CD4-positive, alpha-beta T cell (primary cell): ENCODE measurements at regions of chr4 and their contacts with region 1.

Region 1: GRCh38 chr4:139295206-139295941 is 5.9 kb upstream of the NAA15 start:
- DNase-seq: peak; percentile 95 to 100 (median 98)
- ATAC-seq: peak; percentile 92
- H3K4me3 ChIP-seq: peak overlapping the region; percentile 94
- H3K4me3 Mint-ChIP-seq: peak overlapping the region; percentile 96
- H3K27ac ChIP-seq: peak overlapping the region; percentile 77 to 84
- H3K27ac Mint-ChIP-seq: peak overlapping the region; percentile 92
- H3K4me1 ChIP-seq: peaks cover 15% of the 10 kb centered on the region
- H3K4me1 Mint-ChIP-seq: peaks cover 33% of the 10 kb centered on the region
- H3K27me3 ChIP-seq: no peaks in the 10 kb centered on the region
- H3K27me3 Mint-ChIP-seq: no peaks in the 10 kb centered on the region
- CTCF ChIP-seq: peak; percentile 87

Region 2: DNA sequence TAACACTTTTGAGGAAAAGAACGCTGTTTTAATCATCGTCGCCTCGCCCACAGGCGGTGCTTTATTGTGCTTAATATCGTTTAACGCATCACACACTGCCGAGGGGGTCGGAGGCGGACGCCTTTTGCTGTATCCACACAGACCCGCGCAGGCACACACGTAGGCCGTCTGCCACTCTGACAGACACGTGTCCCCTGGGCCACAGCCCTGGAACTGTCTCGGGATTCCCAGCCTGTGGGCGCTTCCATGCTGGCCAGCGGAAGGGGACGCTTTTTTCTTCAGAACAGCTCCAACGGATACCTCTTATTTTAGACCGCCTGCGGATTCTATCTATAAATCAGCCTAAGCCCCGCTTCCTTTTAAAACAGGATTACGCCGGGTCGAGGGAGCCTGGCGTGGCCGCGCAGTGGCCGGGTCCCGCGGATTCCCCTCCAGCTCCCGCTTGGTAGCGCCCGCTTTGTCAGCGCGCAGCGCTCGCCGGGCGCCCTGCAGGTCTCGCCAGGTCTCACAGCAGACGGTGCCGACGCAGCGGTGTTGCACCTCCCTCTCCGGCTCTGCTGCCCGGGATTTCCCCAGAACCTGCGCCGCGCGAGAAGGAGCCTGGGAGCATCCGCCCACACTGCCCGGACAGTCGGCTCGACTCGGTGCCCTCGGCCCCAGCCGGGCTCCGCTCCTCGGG is 280.0 kb before region 1 on chr4 and contains the start of gene NOCT:
- CTCF ChIA-PET with region 1: interaction called, 6 read pairs
- POLR2A ChIA-PET with region 1: interaction called, 8 read pairs
- intact Hi-C with region 1: loop called (anchors 5 kb)
- DNase-seq: peak; percentile 75 to 98 (median 86)
- ATAC-seq: peak; percentile 90
- H3K4me3 ChIP-seq: peak within 1 kb of the TSS; percentile 74
- H3K4me3 Mint-ChIP-seq: peak within 1 kb of the TSS; percentile 93
- H3K27ac ChIP-seq: peak within 1 kb of the TSS; percentile 78 to 87
- H3K27ac Mint-ChIP-seq: peak within 1 kb of the TSS; percentile 95
- H3K4me1 ChIP-seq: peaks cover 20% of the 10 kb centered on the region
- H3K4me1 Mint-ChIP-seq: peaks cover 26% of the 10 kb centered on the region
- H3K27me3 ChIP-seq: no peaks in the 10 kb centered on the region
- H3K27me3 Mint-ChIP-seq: no peaks in the 10 kb centered on the region
- CTCF ChIP-seq: no peak
- total RNA-seq, gene NOCT: 13.7 to 15.8 TPM

Region 3: GRCh38 chr4:139099366-139099982 is 195.9 kb before region 1 on chr4:
- CTCF ChIA-PET with region 1: interaction called, 17 read pairs
- POLR2A ChIA-PET with region 1: interaction called, 3 read pairs
- intact Hi-C with region 1: loop called (anchors 1 kb)
- DNase-seq: peak; percentile 50 to 90 (median 66)
- ATAC-seq: peak; percentile 88
- H3K4me3 ChIP-seq: no peak overlapping the region
- H3K4me3 Mint-ChIP-seq: no peak overlapping the region
- H3K27ac ChIP-seq: no peak overlapping the region
- H3K27ac Mint-ChIP-seq: no peak overlapping the region
- H3K4me1 ChIP-seq: no peaks in the 10 kb centered on the region
- H3K4me1 Mint-ChIP-seq: peaks cover 5% of the 10 kb centered on the region
- H3K27me3 ChIP-seq: no peaks in the 10 kb centered on the region
- H3K27me3 Mint-ChIP-seq: no peaks in the 10 kb centered on the region
- CTCF ChIP-seq: peak; percentile 89

Region 4: DNA sequence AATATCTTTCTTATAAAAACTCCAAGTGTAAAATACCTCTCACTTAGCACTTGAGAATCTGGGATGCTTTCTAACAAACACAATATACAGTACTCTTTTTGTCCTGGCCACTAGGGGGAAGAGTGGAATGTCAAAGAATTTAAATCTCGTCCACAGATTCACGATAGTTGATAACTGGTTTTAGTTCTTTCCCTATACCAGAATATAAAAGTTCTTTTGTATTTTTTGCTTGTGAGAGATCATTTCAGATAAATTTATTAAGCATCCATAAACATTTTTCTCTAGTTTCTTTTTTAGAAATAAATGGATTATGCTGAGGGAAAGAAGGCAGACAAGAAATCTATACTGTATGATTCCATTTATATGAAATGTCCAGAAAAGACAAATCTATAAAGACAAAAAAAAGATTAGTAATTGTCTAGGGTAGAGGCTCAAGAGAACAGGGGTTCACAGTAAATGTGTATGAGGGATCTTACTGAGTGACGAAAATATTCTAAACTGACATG is 65.8 kb before region 1 on chr4:
- CTCF ChIA-PET with region 1: interaction called, 10 read pairs
- POLR2A ChIA-PET with region 1: interaction called, 5 read pairs
- intact Hi-C with region 1: loop called (anchors 2 kb)
- DNase-seq: peak in 4 of 14 experiments; percentile 17 to 71 (median 67)
- ATAC-seq: peak; percentile 71
- H3K4me3 ChIP-seq: no peak overlapping the region
- H3K4me3 Mint-ChIP-seq: no peak overlapping the region
- H3K27ac ChIP-seq: no peak overlapping the region
- H3K27ac Mint-ChIP-seq: no peak overlapping the region
- H3K4me1 ChIP-seq: no peaks in the 10 kb centered on the region
- H3K4me1 Mint-ChIP-seq: no peaks in the 10 kb centered on the region
- H3K27me3 ChIP-seq: no peaks in the 10 kb centered on the region
- H3K27me3 Mint-ChIP-seq: no peaks in the 10 kb centered on the region
- CTCF ChIP-seq: peak; percentile 82

Region 5: DNA sequence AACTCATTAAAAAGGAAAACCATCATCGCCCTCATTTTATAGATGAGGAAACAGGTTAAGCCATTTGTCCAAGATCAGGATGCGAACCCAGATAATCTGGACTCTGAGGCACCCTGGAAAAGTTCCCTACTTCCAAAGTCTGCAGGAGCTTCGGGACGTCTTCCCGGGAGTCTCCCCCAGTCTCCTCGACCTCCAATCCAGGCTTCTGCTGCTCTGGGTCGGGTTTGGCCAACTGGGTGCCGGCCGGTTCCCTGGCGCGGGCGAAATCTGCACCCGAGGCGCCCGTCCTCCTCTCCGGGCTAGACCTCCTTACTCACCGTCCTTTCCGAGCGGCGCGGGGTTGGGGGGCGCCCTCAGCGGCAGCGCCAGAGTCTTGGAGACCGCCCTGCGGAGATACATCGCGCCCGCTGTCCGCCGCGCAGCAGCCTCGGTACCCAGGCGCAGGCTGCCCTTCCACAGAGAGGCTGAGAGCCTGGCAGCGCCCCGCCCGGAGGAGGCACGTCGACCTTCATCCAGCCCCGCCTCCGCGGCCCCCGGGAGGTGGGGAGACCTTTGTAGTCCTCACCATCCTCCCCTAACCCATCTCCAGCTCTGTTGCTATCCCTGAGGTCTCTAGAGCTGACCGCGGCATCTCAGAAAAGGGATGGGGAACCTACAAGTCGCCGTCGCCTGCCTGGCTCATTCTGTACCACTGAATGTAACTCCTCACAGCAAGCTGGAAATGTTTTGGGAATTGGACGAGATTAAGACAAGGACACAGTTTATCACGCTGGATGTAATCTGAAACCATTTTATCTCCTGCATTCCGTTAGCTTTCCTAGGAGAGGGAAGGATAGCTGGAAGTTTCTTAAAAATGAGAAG is 15.4 kb before region 1 on chr4 and contains the start of gene MGARP:
- CTCF ChIA-PET with region 1: interaction called, 5 read pairs
- POLR2A ChIA-PET with region 1: interaction called, 3 read pairs
- intact Hi-C with region 1: loop called in 1 of 2 experiments (anchors 2 kb)
- DNase-seq: peak in 5 of 14 experiments; percentile 20 to 42 (median 36)
- ATAC-seq: peak; percentile 59
- H3K4me3 ChIP-seq: peak within 1 kb of the TSS; percentile 48
- H3K4me3 Mint-ChIP-seq: peak within 1 kb of the TSS; percentile 77
- H3K27ac ChIP-seq: no peak within 1 kb of the TSS
- H3K27ac Mint-ChIP-seq: no peak within 1 kb of the TSS
- H3K4me1 ChIP-seq: peaks cover 21% of the 10 kb centered on the region
- H3K4me1 Mint-ChIP-seq: peaks cover 18% of the 10 kb centered on the region
- H3K27me3 ChIP-seq: peaks cover 22 to 48% of the 10 kb centered on the region in 2 experiments
- H3K27me3 Mint-ChIP-seq: peaks cover 56% of the 10 kb centered on the region
- CTCF ChIP-seq: no peak
- total RNA-seq, gene MGARP: not detected

Region 6: GRCh38 chr4:139403462-139403861 is 108.1 kb after region 1 on chr4:
- CTCF ChIA-PET with region 1: no interaction called
- POLR2A ChIA-PET with region 1: no interaction called
- intact Hi-C with region 1: no loop called
- DNase-seq: no peak
- ATAC-seq: no peak
- H3K4me3 ChIP-seq: no peak overlapping the region
- H3K4me3 Mint-ChIP-seq: no peak overlapping the region
- H3K27ac ChIP-seq: no peak overlapping the region
- H3K27ac Mint-ChIP-seq: no peak overlapping the region
- H3K4me1 ChIP-seq: no peaks in the 10 kb centered on the region
- H3K4me1 Mint-ChIP-seq: no peaks in the 10 kb centered on the region
- H3K27me3 ChIP-seq: no peaks in the 10 kb centered on the region
- H3K27me3 Mint-ChIP-seq: no peaks in the 10 kb centered on the region
- CTCF ChIP-seq: no peak

Region 7: GRCh38 chr4:139453371-139454110 is 158.2 kb after region 1 on chr4:
- CTCF ChIA-PET with region 1: no interaction called
- POLR2A ChIA-PET with region 1: interaction called, 33 read pairs
- intact Hi-C with region 1: no loop called
- DNase-seq: peak; percentile 93 to 98 (median 96)
- ATAC-seq: peak; percentile 85
- H3K4me3 ChIP-seq: peak overlapping the region; percentile 90
- H3K4me3 Mint-ChIP-seq: peak overlapping the region; percentile 96
- H3K27ac ChIP-seq: peak overlapping the region; percentile 93
- H3K27ac Mint-ChIP-seq: peak overlapping the region; percentile 99
- H3K4me1 ChIP-seq: peaks cover 35% of the 10 kb centered on the region
- H3K4me1 Mint-ChIP-seq: peaks cover 80% of the 10 kb centered on the region
- H3K27me3 ChIP-seq: no peaks in the 10 kb centered on the region
- H3K27me3 Mint-ChIP-seq: no peaks in the 10 kb centered on the region
- CTCF ChIP-seq: peak; percentile 4

Region 8: DNA sequence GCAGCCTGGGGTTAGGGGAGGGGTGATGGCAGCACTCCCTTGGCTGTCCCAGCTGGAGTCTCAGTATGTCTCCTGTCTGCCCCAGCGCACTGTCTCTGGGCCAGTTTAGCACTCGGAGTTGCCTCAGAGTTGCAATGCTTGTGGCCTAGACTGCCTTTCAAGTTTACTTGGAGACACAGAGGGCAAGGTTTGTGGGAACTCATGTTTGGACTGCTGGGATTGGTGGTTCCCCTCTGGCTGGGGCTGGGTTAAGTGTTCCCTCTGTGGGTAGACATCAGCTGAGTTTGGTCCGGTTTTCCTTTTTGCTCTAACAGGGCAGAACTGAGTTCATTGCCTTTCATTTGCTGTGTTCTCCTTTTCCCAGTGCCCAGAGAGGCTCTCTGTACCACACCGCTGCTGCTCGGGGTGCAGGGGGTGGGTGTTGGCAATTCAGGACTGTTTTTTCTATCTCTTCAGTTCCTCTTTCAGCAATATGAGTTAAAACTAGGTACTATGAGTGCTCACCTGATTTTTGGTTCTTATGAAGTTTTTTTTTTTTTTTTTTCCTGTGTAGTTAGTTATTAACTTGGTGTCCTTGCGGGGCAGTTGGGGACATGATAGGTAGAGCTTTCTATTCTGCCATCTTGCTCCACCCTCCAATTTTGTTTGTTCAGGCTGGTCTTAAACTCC is 175.8 kb after region 1 on chr4:
- CTCF ChIA-PET with region 1: no interaction called
- POLR2A ChIA-PET with region 1: no interaction called
- intact Hi-C with region 1: no loop called
- DNase-seq: no peak
- ATAC-seq: no peak
- H3K4me3 ChIP-seq: no peak overlapping the region
- H3K4me3 Mint-ChIP-seq: no peak overlapping the region
- H3K27ac ChIP-seq: no peak overlapping the region
- H3K27ac Mint-ChIP-seq: no peak overlapping the region
- H3K4me1 ChIP-seq: peaks cover 8% of the 10 kb centered on the region
- H3K4me1 Mint-ChIP-seq: peaks cover 23% of the 10 kb centered on the region
- H3K27me3 ChIP-seq: no peaks in the 10 kb centered on the region
- H3K27me3 Mint-ChIP-seq: no peaks in the 10 kb centered on the region
- CTCF ChIP-seq: no peak

Region 9: DNA sequence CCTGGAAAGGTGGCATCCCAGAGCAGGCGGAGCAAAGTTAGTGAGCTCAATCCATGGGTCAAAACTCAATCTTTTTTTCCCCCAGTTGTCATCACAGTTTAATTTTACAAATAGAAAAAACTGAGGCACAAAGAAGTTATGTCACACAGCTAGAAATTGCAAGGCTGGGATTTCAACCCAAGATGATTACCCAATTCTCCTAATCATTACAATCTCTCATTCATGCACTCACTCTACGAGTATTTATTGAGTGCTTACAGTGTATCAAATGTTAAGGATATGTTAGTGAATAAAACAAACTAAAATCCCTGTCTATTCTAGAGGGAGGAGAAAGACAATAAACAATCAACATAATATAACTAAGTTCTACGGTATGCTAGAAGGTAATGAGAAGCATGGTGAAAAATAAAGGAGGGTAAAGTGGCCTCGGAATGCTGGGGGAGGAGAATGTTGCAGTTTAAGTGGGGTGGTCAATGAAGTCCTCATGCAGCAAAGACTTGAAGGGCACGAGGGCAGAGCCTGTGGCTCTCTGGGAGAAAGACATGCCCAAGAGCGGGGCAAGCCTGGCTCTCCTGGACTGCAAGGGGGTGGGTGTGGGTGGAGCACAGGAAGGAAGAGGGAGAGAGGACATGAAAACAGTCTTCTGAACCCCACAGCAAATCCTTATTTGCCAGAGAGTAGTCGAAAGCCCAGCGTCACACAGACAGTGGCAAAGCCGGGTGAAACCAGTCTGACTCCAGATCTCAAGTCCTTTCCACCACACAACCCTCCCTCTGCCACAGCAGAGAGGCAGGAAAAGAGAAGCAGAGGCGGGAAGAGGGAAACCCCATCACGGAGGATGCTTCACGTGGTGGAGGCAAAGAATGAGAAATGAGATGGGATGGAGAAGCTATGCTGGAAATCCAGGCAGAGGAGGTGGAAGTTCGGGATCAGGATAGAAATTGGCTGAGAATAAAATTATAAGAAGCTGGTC is 206.8 kb after region 1 on chr4:
- CTCF ChIA-PET with region 1: no interaction called
- POLR2A ChIA-PET with region 1: no interaction called
- intact Hi-C with region 1: no loop called
- DNase-seq: no peak
- ATAC-seq: no peak
- H3K4me3 ChIP-seq: no peak overlapping the region
- H3K4me3 Mint-ChIP-seq: no peak overlapping the region
- H3K27ac ChIP-seq: no peak overlapping the region
- H3K27ac Mint-ChIP-seq: no peak overlapping the region
- H3K4me1 ChIP-seq: peaks cover 3% of the 10 kb centered on the region
- H3K4me1 Mint-ChIP-seq: no peaks in the 10 kb centered on the region
- H3K27me3 ChIP-seq: no peaks in the 10 kb centered on the region
- H3K27me3 Mint-ChIP-seq: no peaks in the 10 kb centered on the region
- CTCF ChIP-seq: no peak